Posterior vena cava (tissue), 2 donors: ENCODE measurements at regions of chr10 and their contacts with region 1.

Region 1: GRCh38 chr10:125029606-125030242 is 87.8 kb downstream of the ZRANB1 start:
- DNase-seq: peak; percentile 24

Region 2: GRCh38 chr10:126561294-126561920 is 1531.7 kb after region 1 on chr10:
- intact Hi-C with region 1: loop called in 1 of 2 experiments (anchors 5 kb)
- DNase-seq: no peak